Heart left ventricle (tissue), 16 donors: ENCODE measurements at regions of chr3 and their contacts with region 1.

Region 1: DNA sequence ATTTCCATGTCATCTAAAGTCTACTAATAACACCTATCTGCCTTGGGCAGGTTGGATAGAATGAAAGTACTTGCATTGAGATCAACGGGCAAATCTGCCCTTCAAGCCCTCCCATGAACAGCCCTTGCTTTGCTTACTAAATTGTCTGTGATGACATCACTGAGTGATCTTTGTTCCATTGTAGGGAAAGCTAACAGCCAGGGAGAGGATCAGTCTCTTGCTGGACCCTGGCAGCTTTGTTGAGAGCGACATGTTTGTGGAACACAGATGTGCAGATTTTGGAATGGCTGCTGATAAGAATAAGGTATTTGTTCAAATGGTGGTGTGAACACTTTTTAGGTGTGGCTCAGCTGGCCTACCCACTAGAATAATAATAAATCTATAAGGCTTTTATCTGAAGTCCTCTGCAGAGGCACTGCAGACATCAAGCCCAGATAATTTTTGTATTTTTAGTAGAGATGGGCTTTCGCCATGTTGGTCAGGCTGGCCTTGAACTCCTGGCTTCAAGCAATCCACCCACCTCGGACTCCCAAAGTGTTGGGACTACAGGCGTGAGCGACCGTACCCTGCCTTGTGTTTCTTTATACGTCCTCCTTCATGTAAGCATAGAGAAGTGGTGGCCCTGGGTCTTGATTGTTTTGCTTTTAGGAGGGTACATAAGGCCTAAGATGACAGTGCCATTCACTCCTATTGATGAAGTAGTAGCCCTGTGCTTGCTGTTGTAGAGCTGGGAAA is 5.7 kb downstream of the PCCB start:
- DNase-seq: no peak
- ATAC-seq: no peak
- H3K4me3 ChIP-seq: no peak overlapping the region
- H3K27ac ChIP-seq: no peak overlapping the region
- H3K4me1 ChIP-seq: peaks cover 0 to 16% (median 10%) of the 10 kb centered on the region in 12 donors
- H3K27me3 ChIP-seq: no peaks in the 10 kb centered on the region
- CTCF ChIP-seq: no peak
- POLR2A ChIP-seq: no peak

Region 2: GRCh38 chr3:136093771-136094170 is 162.1 kb before region 1 on chr3:
- intact Hi-C with region 1: loop called in 2 of 10 experiments (anchors 5 to 10 kb)
- DNase-seq: no peak
- ATAC-seq: no peak
- H3K4me3 ChIP-seq: no peak overlapping the region
- H3K27ac ChIP-seq: no peak overlapping the region
- H3K4me1 ChIP-seq: no peaks in the 10 kb centered on the region
- H3K27me3 ChIP-seq: no peaks in the 10 kb centered on the region
- CTCF ChIP-seq: no peak
- POLR2A ChIP-seq: no peak